Activated CD4-positive, alpha-beta T cell treated with anti-CD3 and anti-CD28 coated beads, Interleukin-2, amount 10 ng/mL, durations not matched to agents 7 days and 5 days (primary cell): ENCODE measurements at regions of chr4 and their contacts with region 1.

Region 1: GRCh38 chr4:108030332-108030731 is 40.6 kb downstream of the HADH start:
- DNase-seq: peak; percentile 82
- H3K4me3 Mint-ChIP-seq: no peak overlapping the region
- H3K27ac Mint-ChIP-seq: peak overlapping the region; percentile 82
- H3K4me1 Mint-ChIP-seq: peaks cover 73% of the 10 kb centered on the region
- H3K27me3 Mint-ChIP-seq: no peaks in the 10 kb centered on the region

Region 2: DNA sequence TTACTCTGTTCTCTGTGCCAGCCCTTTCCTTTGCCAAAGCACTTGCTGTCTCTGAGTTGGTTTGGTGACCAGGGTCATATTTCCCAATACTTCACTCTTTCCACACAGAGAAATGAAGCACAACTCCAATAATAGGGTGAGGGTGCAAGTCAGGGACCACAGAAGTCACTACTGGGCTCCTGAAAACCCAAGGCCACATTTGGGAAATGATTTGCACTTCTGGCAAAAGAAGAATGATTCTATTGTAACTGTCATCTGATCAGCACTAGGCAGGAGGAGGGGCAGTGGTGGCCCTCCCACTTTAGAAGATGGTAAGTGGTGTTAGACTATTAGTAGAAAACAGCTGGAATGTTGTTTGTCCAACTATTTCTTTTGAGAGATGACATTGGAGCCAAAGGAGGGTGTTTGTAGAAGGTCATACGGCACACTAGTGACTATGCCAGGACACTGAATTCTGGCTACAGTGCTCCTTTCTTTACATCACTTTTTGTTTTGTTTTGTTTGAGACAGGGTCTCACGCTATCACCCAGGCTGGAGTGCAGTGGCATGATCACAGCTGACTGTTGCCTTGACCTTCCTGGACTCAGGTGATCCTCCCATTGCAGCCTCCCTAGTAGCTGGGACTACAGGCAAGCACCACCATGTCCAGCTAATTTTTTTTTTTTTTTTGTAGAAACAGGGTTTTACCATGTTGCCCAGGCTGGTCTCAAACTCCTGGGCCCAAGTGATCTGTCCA is 51.4 kb before region 1 on chr4:
- CTCF ChIA-PET with region 1: no interaction called
- POLR2A ChIA-PET with region 1: no interaction called
- DNase-seq: no peak
- H3K4me3 Mint-ChIP-seq: no peak overlapping the region
- H3K27ac Mint-ChIP-seq: no peak overlapping the region
- H3K4me1 Mint-ChIP-seq: peaks cover 6% of the 10 kb centered on the region
- H3K27me3 Mint-ChIP-seq: no peaks in the 10 kb centered on the region

Region 3: DNA sequence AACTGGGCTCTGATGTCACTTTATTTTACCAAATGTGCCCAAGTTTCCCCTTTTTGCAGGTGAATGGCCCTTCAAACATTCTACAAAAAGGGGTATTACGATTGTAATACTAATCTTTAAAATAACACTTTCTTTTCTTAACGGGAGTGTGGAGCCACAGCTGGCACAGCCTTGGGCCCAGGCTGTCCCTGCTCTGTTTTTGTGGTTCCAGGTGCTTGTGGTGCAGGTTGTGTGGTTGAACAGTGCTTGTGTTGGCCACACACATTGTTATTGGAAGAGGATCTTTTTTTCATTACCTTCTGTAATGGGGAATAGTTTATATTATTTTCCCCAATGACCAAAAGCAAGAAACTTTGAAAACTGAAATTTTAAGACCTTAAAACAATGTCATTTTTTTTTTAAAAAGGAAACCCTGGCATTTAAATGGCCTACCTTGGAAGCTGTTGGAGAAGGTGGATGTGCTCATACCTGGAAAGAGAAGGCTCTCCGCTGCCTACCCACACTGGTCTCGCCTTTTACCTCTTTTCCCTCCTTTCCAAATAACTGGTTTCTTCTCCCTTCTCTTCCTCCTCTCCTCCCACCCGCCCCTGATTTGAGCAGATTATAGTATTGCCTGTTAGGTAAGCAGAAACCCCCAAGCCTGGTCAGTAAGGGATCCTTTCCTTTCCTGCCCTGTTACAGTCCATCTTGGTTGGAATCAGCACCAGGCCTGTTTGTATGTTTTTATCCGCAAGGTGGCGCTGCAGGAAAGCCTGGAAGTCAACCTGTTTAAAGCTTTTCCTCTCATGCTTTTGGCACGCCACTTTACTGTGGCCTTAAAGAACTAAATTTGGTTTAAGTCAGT is 12.1 kb before region 1 on chr4:
- CTCF ChIA-PET with region 1: interaction called, 32 read pairs
- POLR2A ChIA-PET with region 1: no interaction called
- DNase-seq: peak; percentile 90
- H3K4me3 Mint-ChIP-seq: no peak overlapping the region
- H3K27ac Mint-ChIP-seq: peak overlapping the region; percentile 21
- H3K4me1 Mint-ChIP-seq: peaks cover 34% of the 10 kb centered on the region
- H3K27me3 Mint-ChIP-seq: no peaks in the 10 kb centered on the region